ENCODE measurements at regions of chr18 and their contacts with region 1.

Region 1: DNA sequence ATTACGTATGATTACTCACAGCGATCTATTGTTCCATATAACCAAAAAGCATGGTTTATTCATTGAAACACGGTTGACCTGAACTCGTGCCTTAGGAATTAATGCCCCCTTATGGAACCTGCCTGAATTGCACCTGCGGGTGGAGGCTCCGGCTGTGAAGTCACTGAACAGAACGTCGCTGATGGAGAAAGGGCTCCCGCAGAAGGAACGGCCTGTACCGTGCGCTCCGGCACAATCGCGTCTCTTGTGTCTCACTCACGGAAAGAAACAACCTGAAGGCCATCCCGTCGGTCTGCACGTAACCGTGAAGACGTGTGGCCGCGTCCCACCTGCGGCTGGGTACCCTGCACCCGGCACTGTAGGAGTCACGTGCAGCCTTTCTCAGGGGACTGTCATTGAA is 133.1 kb downstream of the NFATC1 start:
- DNase-seq: peak in 2 of 3 donors; percentile 25 to 36
- H3K4me3 ChIP-seq: no peak overlapping the region
- H3K4me3 Mint-ChIP-seq: no peak overlapping the region
- H3K27ac ChIP-seq: no peak overlapping the region
- H3K27ac Mint-ChIP-seq: no peak overlapping the region
- H3K4me1 ChIP-seq: peaks cover 6 to 7% of the 10 kb centered on the region in 2 donors
- H3K4me1 Mint-ChIP-seq: peaks cover 6% of the 10 kb centered on the region
- H3K27me3 ChIP-seq: peaks cover 0 to 30% of the 10 kb centered on the region in 2 donors
- H3K27me3 Mint-ChIP-seq: peaks cover 5 to 15% (median 9%) of the 10 kb centered on the region in 3 donors
- CTCF ChIP-seq: peak; percentile 85

Region 2: GRCh38 chr18:79644006-79644665 is 115.3 kb after region 1 on chr18:
- intact Hi-C with region 1: loop called in 1 of 2 experiments (anchors 10 kb)
- DNase-seq: peak; percentile 33 to 67 (median 39)
- H3K4me3 ChIP-seq: peak overlapping the region in 1 of 3 experiments; percentile 47
- H3K4me3 Mint-ChIP-seq: peak overlapping the region in 1 of 2 donors; percentile 35
- H3K27ac ChIP-seq: no peak overlapping the region
- H3K27ac Mint-ChIP-seq: peak overlapping the region in 1 of 7 donors; percentile 82
- H3K4me1 ChIP-seq: peaks cover 31 to 42% of the 10 kb centered on the region in 2 donors
- H3K4me1 Mint-ChIP-seq: peaks cover 42% of the 10 kb centered on the region
- H3K27me3 ChIP-seq: peaks cover 0 to under 1% of the 10 kb centered on the region in 2 donors
- H3K27me3 Mint-ChIP-seq: peaks cover 2 to 12% (median 8%) of the 10 kb centered on the region in 3 donors
- CTCF ChIP-seq: peak; percentile 99

Measured in CD14-positive monocyte (primary cell).